Psoas muscle (tissue), 8 donors: ENCODE measurements at regions of chr11 and their contacts with region 1.

Region 1: DNA sequence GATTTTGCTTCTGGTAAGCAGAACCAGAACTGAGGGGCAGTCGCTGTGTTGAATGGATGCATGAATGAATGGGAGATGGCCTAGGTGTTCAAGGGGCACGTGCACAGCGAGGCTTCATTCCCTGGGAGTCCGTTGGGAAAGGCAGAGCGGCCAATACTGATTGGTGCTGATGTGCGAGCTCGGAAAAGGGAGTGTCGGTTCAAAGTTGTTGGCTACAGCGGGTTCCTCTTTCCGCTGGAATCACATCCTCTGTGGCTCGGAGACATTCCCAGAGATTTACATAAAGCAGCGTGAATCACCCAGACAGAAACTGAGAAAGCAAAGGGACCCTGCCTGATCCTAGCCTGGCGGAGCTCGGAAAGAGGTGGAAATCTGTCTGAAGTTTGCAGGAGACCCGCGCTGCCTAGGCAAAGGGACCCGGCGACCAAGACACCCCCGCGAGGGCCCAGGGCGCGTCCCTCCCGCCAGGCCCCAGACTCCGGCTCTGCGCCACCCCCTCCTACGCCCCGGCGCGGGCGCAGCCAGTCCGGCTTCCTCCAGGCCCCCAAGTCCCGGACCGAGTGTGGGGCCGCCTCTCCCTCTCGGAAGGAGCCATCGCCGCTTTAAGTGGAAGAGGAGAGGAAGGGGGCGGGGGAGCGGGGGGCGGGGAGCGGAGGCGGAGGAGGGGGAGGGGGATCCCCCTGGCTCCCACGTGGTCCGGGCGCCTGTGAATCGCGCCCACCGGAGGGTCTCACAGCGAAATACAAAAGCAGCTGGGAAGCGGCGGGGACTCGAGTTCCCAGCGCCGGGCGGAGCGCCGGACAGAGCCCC is at the start of gene FJX1:
- DNase-seq: peak; percentile 66 to 70
- ATAC-seq: peak; percentile 31 to 72 (median 60)
- H3K4me3 ChIP-seq: peak within 1 kb of the TSS; percentile 74
- H3K27ac ChIP-seq: peak within 1 kb of the TSS; percentile 47
- H3K4me1 ChIP-seq: no peaks in the 10 kb centered on the region
- H3K27me3 ChIP-seq: peaks cover 0 to 15% (median 0%) of the 10 kb centered on the region in 3 donors
- CTCF ChIP-seq: no peak
- total RNA-seq, gene FJX1: 0.75 to 4.0 (median 3.1) TPM

Region 2: GRCh38 chr11:35650006-35650405 is 32.1 kb after region 1 on chr11:
- intact Hi-C with region 1: no loop called
- DNase-seq: no peak
- ATAC-seq: no peak
- H3K4me3 ChIP-seq: no peak overlapping the region
- H3K27ac ChIP-seq: no peak overlapping the region
- H3K4me1 ChIP-seq: no peaks in the 10 kb centered on the region
- H3K27me3 ChIP-seq: peaks cover 0 to 3% (median 0%) of the 10 kb centered on the region in 3 donors
- CTCF ChIP-seq: no peak

Region 3: GRCh38 chr11:35794850-35795249 is 177.0 kb after region 1 on chr11:
- intact Hi-C with region 1: loop called in 1 of 2 experiments (anchors 10 kb)
- DNase-seq: no peak
- ATAC-seq: peak in 3 of 4 donors; percentile 24 to 51 (median 27)
- H3K4me3 ChIP-seq: no peak overlapping the region
- H3K27ac ChIP-seq: no peak overlapping the region
- H3K4me1 ChIP-seq: peaks cover 20% of the 10 kb centered on the region
- H3K27me3 ChIP-seq: no peaks in the 10 kb centered on the region
- CTCF ChIP-seq: no peak

Region 4: DNA sequence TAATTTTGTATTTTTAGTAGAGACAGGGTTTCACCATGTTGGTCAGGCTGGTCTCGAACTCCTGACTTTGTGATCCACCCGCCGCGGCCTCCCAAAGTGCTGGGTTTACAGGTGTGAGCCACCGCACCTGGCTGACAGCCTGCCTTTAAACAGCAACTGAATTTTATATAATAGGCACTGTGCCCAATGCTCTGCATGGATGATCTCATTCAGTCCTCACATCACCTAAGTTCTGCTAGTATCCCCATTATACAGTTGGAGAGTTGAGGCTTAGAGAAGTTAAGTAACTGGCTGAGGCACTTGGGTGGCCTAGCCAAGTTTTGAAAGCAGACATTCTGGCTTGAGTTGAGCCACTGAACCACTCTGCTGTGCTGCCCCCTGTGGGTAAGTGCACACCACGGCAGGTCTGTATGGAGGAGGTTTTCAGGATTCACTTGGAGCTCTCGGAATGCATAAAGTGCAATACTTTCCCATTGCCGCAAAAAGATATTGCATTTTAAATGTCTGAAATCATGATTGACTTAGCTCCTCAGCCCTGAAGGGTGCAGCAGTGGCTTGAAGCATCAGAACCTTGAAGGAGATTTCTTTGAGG is 438.4 kb after region 1 on chr11:
- intact Hi-C with region 1: loop called in 1 of 2 experiments (anchors 10 kb)
- DNase-seq: no peak
- ATAC-seq: peak in 2 of 4 donors; percentile 65 to 72
- H3K4me3 ChIP-seq: no peak overlapping the region
- H3K27ac ChIP-seq: no peak overlapping the region
- H3K4me1 ChIP-seq: no peaks in the 10 kb centered on the region
- H3K27me3 ChIP-seq: no peaks in the 10 kb centered on the region
- CTCF ChIP-seq: peak; percentile 35

Region 5: DNA sequence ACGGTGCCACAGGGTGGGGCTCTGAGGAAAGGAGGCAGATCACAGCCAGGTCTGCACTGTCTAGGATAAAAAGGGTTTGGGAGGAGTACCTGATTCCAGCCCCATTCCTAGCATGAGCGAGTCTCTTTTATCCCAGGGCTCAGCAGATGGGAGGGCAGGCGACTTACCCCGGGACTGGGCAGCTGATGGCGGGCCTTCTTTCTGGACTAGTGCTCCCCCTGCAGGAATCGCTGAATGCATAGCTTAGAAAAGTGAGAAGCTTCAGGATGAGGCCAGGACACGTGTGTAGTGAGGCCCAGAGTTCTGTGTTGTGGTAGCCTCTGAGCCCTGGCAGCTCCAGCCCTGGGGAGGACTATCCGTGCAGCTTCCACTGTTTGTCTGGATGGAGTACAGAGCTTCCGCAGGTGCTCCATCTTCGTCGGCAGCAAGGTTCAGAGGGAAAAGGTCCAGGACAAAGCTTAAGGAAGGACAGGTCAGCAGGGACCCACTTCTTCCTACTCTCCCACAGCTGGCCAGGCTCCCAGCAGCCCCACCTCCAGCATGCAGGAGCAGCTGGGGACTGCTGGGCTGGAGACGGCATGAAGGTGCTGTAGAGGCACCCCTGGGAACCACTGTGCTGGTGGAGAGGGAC is 641.0 kb after region 1 on chr11:
- intact Hi-C with region 1: loop called in 1 of 2 experiments (anchors 2 kb)
- DNase-seq: peak; percentile 49 to 69
- ATAC-seq: peak; percentile 86 to 95 (median 88)
- H3K4me3 ChIP-seq: no peak overlapping the region
- H3K27ac ChIP-seq: no peak overlapping the region
- H3K4me1 ChIP-seq: no peaks in the 10 kb centered on the region
- H3K27me3 ChIP-seq: no peaks in the 10 kb centered on the region
- CTCF ChIP-seq: peak; percentile 53

Region 6: GRCh38 chr11:36492724-36493304 is 874.9 kb after region 1 on chr11:
- intact Hi-C with region 1: loop called in 1 of 2 experiments (anchors 5 kb)
- DNase-seq: no peak
- ATAC-seq: peak in 3 of 4 donors; percentile 53 to 71 (median 66)
- H3K4me3 ChIP-seq: no peak overlapping the region
- H3K27ac ChIP-seq: no peak overlapping the region
- H3K4me1 ChIP-seq: peaks cover 19% of the 10 kb centered on the region
- H3K27me3 ChIP-seq: no peaks in the 10 kb centered on the region
- CTCF ChIP-seq: peak; percentile 81